GM10248 (cell line): ENCODE measurements at regions of chr6 and their contacts with region 1.

Region 1: GRCh38 chr6:21501021-21501354 is 92.6 kb upstream of the SOX4 start:
- DNase-seq: no peak
- CTCF ChIP-seq: no peak

Region 2: DNA sequence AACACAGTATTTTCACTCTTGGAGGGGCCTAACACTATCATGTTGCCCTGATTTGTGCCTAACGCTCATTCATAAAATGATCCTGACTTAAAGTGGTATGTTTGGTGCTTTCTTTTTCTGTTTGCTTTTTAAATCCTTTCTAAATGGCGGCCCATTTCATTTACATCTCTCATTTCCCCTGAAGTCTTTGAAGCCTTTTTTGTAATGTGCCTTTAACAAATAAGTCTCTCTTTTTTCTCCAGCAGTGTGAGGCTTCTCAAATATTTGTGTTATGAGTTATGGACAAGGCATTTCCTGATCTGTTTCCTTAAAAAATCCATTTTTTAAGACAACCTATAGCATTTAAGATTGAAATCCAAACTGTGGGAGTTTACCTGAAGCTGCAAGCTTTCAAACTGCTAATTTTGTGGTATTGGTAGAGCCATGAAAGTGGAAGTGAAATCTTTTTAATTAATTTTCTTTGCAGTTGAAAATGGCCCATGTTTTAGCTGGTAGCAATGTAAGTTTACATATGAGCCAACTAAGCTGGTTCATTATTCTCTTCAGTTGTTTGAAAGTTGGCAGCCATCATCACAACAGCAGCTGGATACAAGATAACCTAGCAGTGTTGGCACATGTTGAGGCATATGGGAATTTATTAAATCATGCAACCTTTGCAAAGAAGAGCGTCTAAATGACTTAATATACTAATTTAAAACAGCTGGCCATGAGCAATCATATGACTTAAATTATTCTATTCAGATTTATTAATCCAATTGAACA is 497.0 kb before region 1 on chr6:
- CTCF ChIA-PET with region 1: no interaction called
- POLR2A ChIA-PET with region 1: no interaction called
- DNase-seq: peak; percentile 31
- CTCF ChIP-seq: no peak

Region 3: DNA sequence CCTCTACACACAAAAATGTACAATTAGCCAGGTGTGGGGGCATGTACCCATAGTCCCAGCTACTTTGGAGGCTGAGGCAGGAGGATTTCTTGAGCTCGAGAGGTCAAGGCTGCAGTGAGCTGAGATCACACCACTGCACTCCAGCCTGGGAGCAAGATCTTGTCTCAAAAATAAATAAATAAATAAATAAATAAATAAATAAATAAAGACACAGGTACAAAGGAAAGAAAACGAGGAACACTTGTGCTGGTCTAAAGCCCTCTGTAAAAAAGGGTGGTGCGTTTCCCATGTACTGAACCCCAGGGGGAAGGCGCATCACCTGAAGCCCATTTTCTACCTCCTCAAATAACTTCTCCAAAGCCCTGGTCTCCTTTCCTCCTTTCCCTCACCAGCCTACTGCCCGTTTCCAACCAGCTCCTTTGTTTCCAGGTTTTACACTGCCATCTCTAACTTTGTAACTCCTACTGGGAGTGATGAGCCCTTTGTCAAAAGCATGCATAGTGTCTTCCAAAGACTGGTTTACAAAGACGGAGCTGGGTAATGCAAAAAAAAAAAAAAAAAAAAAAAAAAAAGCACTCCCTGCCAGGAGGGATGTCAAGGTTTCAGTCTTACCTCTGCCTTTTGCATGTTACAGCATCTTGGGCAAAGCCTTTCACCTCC is 11.0 kb after region 1 on chr6:
- CTCF ChIA-PET with region 1: interaction called, 13 read pairs
- POLR2A ChIA-PET with region 1: no interaction called
- DNase-seq: no peak
- CTCF ChIP-seq: no peak